CD4-positive, alpha-beta memory T cell (primary cell): ENCODE measurements at regions of chr14 and their contacts with region 1.

Region 1: GRCh38 chr14:91244501-91244901 is at the start of gene GPR68:
- DNase-seq: peak in 4 of 5 donors; percentile 40 to 69 (median 43)
- H3K4me3 ChIP-seq: peak within 1 kb of the TSS; percentile 66 to 96
- H3K4me3 Mint-ChIP-seq: peak within 1 kb of the TSS; percentile 91 to 99 (median 94)
- H3K27ac ChIP-seq: peak within 1 kb of the TSS; percentile 99
- H3K27ac Mint-ChIP-seq: peak within 1 kb of the TSS; percentile 92 to 100 (median 99)
- H3K4me1 ChIP-seq: peaks cover 94% of the 10 kb centered on the region
- H3K4me1 Mint-ChIP-seq: peaks cover 64 to 98% (median 82%) of the 10 kb centered on the region in 4 donors
- H3K27me3 ChIP-seq: no peaks in the 10 kb centered on the region
- H3K27me3 Mint-ChIP-seq: no peaks in the 10 kb centered on the region
- total RNA-seq, gene GPR68: 10.6 to 10.8 TPM

Region 2: GRCh38 chr14:91114079-91115065 is 130.1 kb before region 1 on chr14:
- CTCF ChIA-PET with region 1: interaction called, 3 read pairs
- POLR2A ChIA-PET with region 1: interaction called, 16 read pairs
- intact Hi-C with region 1: no loop called
- DNase-seq: peak; percentile 64 to 82 (median 74)
- H3K4me3 ChIP-seq: peak overlapping the region; percentile 85 to 95
- H3K4me3 Mint-ChIP-seq: peak overlapping the region; percentile 88 to 99 (median 94)
- H3K27ac ChIP-seq: peak overlapping the region; percentile 94
- H3K27ac Mint-ChIP-seq: peak overlapping the region; percentile 94 to 99 (median 97)
- H3K4me1 ChIP-seq: peaks cover 72% of the 10 kb centered on the region
- H3K4me1 Mint-ChIP-seq: peaks cover 54 to 84% (median 69%) of the 10 kb centered on the region in 4 donors
- H3K27me3 ChIP-seq: no peaks in the 10 kb centered on the region
- H3K27me3 Mint-ChIP-seq: no peaks in the 10 kb centered on the region

Region 3: GRCh38 chr14:91228112-91229004 is 16.1 kb before region 1 on chr14:
- CTCF ChIA-PET with region 1: interaction called, 45 read pairs
- POLR2A ChIA-PET with region 1: interaction called, 963 read pairs
- intact Hi-C with region 1: loop called (anchors 1 kb)
- DNase-seq: peak; percentile 74 to 96 (median 77)
- H3K4me3 ChIP-seq: peak overlapping the region; percentile 2 to 28
- H3K4me3 Mint-ChIP-seq: peak overlapping the region; percentile 41 to 97 (median 86)
- H3K27ac ChIP-seq: peak overlapping the region; percentile 88
- H3K27ac Mint-ChIP-seq: peak overlapping the region; percentile 97 to 100 (median 99)
- H3K4me1 ChIP-seq: peaks cover 98% of the 10 kb centered on the region
- H3K4me1 Mint-ChIP-seq: peaks cover 78 to 100% (median 91%) of the 10 kb centered on the region in 4 donors
- H3K27me3 ChIP-seq: no peaks in the 10 kb centered on the region
- H3K27me3 Mint-ChIP-seq: no peaks in the 10 kb centered on the region

Region 4: DNA sequence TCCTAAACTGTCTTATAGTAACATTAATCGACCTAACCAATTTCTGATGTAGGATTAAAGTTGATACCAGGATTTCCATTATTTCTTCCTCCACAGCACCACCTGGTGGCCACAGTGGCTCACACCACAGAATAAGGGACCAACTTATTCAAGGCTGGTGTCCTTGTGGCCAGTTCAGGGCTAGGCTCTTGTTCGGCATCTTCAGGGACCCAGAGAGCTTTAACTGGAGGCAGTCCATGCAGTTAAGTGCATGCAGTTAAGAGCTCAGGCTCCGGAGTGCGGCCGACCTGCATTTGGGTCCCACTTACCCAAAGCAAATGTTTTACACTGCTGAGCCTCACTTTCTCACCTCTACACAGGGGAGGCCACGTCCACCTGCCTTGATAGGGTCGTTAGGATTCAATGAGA is 42.0 kb after region 1 on chr14:
- CTCF ChIA-PET with region 1: interaction called, 25 read pairs
- POLR2A ChIA-PET with region 1: interaction called, 5 read pairs
- intact Hi-C with region 1: loop called (anchors 1 kb)
- DNase-seq: peak; percentile 66 to 77 (median 74)
- H3K4me3 ChIP-seq: no peak overlapping the region
- H3K4me3 Mint-ChIP-seq: no peak overlapping the region
- H3K27ac ChIP-seq: no peak overlapping the region
- H3K27ac Mint-ChIP-seq: peak overlapping the region in 6 of 7 donors; percentile 53 to 92 (median 76)
- H3K4me1 ChIP-seq: peaks cover 12% of the 10 kb centered on the region
- H3K4me1 Mint-ChIP-seq: peaks cover 3 to 19% (median 6%) of the 10 kb centered on the region in 4 donors
- H3K27me3 ChIP-seq: no peaks in the 10 kb centered on the region
- H3K27me3 Mint-ChIP-seq: no peaks in the 10 kb centered on the region

Region 5: DNA sequence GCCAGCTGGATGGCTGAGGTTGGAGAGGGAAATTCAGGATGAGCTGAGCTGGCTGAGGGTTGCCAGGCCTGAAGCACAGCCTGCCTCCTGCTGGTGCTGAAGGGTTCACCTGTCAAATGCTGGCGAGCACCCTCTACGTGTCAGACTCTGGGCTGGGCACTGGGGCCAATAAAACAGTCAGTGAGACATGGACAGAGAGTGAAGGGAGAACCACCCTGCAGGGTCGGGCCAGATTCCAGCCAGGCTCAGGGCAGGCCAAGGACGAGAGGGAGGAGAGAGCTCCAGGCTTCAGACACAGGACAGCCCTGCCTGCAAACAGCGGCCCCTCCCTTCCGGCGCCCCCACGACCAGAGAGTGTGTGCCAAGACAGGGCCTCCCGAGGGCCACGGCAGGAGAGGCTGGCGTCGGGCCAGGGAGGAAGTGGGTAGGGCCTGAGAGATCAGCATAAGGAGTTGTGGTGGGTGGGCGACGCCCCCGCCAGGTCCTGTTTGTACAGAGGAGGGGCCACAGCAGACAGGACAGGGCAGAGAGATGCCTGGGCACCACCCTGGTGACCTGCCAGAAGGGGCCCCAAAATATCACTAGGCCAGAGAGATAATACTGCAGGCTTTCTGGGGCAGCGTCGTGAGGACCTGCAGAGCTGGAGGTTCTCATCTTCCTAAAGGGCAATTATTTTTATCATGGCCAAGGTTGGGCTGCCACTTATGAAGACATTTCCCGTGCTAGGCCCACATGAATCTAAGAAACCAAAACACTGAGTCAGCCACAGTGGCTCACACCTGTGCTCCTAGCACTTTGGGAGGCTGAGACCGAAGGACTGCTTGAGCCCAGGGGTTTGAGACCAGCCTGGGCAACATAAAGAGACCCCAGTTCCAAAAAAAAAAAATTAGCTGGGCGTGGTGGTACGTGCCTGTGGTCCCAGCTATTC is 73.1 kb after region 1 on chr14:
- CTCF ChIA-PET with region 1: interaction called, 3 read pairs
- POLR2A ChIA-PET with region 1: interaction called, 21 read pairs
- intact Hi-C with region 1: no loop called
- DNase-seq: peak; percentile 84 to 87 (median 85)
- H3K4me3 ChIP-seq: peak overlapping the region; percentile 17 to 29
- H3K4me3 Mint-ChIP-seq: peak overlapping the region; percentile 76 to 90 (median 84)
- H3K27ac ChIP-seq: peak overlapping the region; percentile 75
- H3K27ac Mint-ChIP-seq: peak overlapping the region; percentile 98 to 100 (median 99)
- H3K4me1 ChIP-seq: peaks cover 98% of the 10 kb centered on the region
- H3K4me1 Mint-ChIP-seq: peaks cover 45 to 88% (median 68%) of the 10 kb centered on the region in 4 donors
- H3K27me3 ChIP-seq: no peaks in the 10 kb centered on the region
- H3K27me3 Mint-ChIP-seq: no peaks in the 10 kb centered on the region